ENCODE measurements at regions of chr18 and their contacts with region 1.

Region 1: GRCh38 chr18:29853126-29853525 is 1189.4 kb downstream of the DSC3 start:
- DNase-seq: no peak
- H3K4me3 ChIP-seq: no peak overlapping the region
- H3K27ac ChIP-seq: no peak overlapping the region
- H3K4me1 ChIP-seq: no peaks in the 10 kb centered on the region
- H3K27me3 ChIP-seq: no peaks in the 10 kb centered on the region
- CTCF ChIP-seq: no peak
- POLR2A ChIP-seq: no peak

Region 2: GRCh38 chr18:29361853-29362252 is 491.3 kb before region 1 on chr18:
- intact Hi-C with region 1: no loop called
- DNase-seq: no peak
- H3K4me3 ChIP-seq: no peak overlapping the region
- H3K27ac ChIP-seq: no peak overlapping the region
- H3K4me1 ChIP-seq: no peaks in the 10 kb centered on the region
- H3K27me3 ChIP-seq: no peaks in the 10 kb centered on the region
- CTCF ChIP-seq: no peak
- POLR2A ChIP-seq: no peak

Region 3: DNA sequence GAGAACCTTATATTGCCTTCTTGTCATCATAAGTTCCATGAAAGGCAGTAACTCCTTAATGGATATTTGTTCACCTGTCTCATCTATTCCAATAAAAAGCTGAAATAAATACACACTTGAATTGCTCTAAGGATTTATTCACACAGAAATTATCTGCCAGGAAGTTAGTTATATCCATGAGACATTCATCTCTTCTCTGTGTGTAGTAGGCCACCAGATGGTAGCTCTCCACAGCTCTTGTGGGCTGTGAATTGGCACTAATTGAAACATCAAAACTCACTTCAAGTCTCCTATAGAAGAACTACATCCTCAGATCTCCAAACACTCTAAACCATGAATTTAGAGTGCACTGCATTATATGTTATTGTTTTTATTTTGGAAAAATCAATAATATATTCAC is 999.9 kb after region 1 on chr18:
- intact Hi-C with region 1: loop called (anchors 10 kb)
- DNase-seq: no peak
- H3K4me3 ChIP-seq: no peak overlapping the region
- H3K27ac ChIP-seq: no peak overlapping the region
- H3K4me1 ChIP-seq: no peaks in the 10 kb centered on the region
- H3K27me3 ChIP-seq: no peaks in the 10 kb centered on the region
- CTCF ChIP-seq: no peak
- POLR2A ChIP-seq: no peak